Right lobe of liver (tissue), 6 donors: ENCODE measurements at regions of chr3 and their contacts with region 1.

Region 1: GRCh38 chr3:52851348-52851747 is 16.5 kb upstream of the MUSTN1 start:
- DNase-seq: peak; percentile 61 to 72 (median 67)
- ATAC-seq: peak; percentile 86 to 93 (median 90)
- H3K4me3 ChIP-seq: no peak overlapping the region
- H3K27ac ChIP-seq: no peak overlapping the region
- H3K4me1 ChIP-seq: peaks cover 0 to 8% (median under 1%) of the 10 kb centered on the region in 4 donors
- H3K27me3 ChIP-seq: no peaks in the 10 kb centered on the region
- CTCF ChIP-seq: peak; percentile 63 to 94 (median 70)
- POLR2A ChIP-seq: no peak

Region 2: DNA sequence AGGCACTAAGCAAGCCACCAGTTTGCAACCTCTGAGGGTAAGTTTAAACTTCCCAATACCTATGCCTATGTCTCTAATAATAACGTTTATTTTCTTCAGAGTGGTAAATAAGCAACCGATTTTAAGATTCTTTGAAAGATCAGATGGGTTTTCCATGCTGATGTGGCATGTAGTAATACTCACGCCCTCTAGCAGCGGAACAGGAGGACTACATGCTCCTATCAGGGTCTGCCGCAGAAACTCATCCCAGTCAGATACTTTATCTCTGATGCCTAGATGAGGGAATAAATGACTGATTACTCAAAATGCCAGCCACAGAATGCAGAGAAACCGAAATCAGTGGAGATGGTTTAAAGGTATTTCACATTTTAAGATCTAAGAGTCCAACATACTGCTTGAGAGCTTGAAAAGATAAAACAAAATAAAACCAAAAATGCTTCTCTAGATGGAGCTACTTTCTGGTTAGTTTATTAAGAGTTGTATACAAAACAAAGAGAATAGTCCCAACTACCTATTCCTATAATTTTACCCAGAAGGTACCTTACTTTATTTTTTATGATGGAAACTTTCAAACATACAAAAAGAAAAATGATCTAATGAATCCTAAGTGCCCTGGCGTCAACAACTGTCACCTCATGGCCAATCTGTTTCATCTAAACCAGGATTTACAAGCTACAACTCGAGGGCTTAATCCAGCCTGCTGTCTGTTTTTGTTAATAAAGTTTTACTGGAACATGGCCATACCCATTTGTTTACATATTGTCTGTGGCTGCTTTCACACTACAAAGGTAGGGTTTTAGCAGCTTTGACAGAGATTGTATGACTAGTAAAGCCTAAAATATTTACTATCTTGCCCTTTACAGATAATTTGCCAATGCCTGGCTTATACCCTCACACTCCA is 83.5 kb after region 1 on chr3:
- intact Hi-C with region 1: loop called in 1 of 2 experiments (anchors 5 kb)
- DNase-seq: peak in 1 of 3 donors; percentile 56
- ATAC-seq: peak; percentile 98 to 99 (median 99)
- H3K4me3 ChIP-seq: no peak overlapping the region
- H3K27ac ChIP-seq: no peak overlapping the region
- H3K4me1 ChIP-seq: peaks cover 0 to 13% (median 5%) of the 10 kb centered on the region in 4 donors
- H3K27me3 ChIP-seq: no peaks in the 10 kb centered on the region
- CTCF ChIP-seq: peak; percentile 70 to 80 (median 76)
- POLR2A ChIP-seq: no peak